ENCODE measurements at regions of chr14 and their contacts with region 1.

Region 1: GRCh38 chr14:84770030-84770429 is 759.9 kb upstream of the FLRT2 start:
- DNase-seq: no peak
- ATAC-seq: no peak
- H3K4me3 ChIP-seq: no peak overlapping the region
- H3K27ac ChIP-seq: no peak overlapping the region
- H3K4me1 ChIP-seq: no peaks in the 10 kb centered on the region
- H3K27me3 ChIP-seq: no peaks in the 10 kb centered on the region
- CTCF ChIP-seq: no peak

Region 2: GRCh38 chr14:84750763-84751554 is 19.1 kb before region 1 on chr14:
- CTCF ChIA-PET with region 1: no interaction called
- POLR2A ChIA-PET with region 1: no interaction called
- in situ Hi-C with region 1: no loop called
- intact Hi-C with region 1: no loop called
- DNase-seq: no peak
- ATAC-seq: no peak
- H3K4me3 ChIP-seq: no peak overlapping the region
- H3K27ac ChIP-seq: no peak overlapping the region
- H3K4me1 ChIP-seq: no peaks in the 10 kb centered on the region
- H3K27me3 ChIP-seq: no peaks in the 10 kb centered on the region
- CTCF ChIP-seq: no peak

Region 3: GRCh38 chr14:84961637-84962036 is 191.6 kb after region 1 on chr14:
- CTCF ChIA-PET with region 1: no interaction called
- POLR2A ChIA-PET with region 1: interaction called, 11 read pairs
- in situ Hi-C with region 1: no loop called
- intact Hi-C with region 1: no loop called
- DNase-seq: no peak
- ATAC-seq: no peak
- H3K4me3 ChIP-seq: no peak overlapping the region
- H3K27ac ChIP-seq: no peak overlapping the region
- H3K4me1 ChIP-seq: no peaks in the 10 kb centered on the region
- H3K27me3 ChIP-seq: no peaks in the 10 kb centered on the region
- CTCF ChIP-seq: no peak